ENCODE measurements at regions of chr3 and their contacts with region 1.

Region 1: DNA sequence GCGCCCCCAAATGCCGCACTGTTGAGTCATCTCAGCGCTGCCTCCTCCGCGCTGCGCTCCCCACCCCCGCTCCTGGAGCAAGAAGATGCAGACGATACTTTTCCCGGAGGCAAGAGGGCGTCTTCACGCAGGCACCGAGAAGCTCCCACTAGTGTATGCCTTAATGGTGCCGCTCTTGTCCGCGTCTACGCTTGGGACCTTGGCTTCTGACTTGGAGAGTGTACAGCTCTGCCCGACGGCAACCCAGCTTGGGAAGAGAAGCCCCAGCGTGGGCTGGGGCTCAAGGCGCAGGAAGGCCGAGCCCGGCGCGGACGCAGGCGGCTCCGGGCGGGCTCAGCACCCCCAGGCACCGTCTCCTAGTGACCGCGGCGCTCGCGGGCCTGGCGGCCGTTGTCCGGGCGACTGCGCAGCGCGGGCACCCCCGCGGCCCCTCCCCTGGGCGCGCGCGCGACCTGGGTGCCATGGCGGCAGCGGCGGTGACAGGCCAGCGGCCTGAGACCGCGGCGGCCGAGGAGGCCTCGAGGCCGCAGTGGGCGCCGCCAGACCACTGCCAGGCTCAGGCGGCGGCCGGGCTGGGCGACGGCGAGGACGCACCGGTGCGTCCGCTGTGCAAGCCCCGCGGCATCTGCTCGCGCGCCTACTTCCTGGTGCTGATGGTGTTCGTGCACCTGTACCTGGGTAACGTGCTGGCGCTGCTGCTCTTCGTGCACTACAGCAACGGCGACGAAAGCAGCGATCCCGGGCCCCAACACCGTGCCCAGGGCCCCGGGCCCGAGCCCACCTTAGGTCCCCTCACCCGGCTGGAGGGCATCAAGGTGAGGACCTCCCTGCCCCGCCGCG is at the start of gene P4HTM:
- DNase-seq: peak in 8 of 10 donors; percentile 77 to 94 (median 90)
- H3K4me3 ChIP-seq: peak within 1 kb of the TSS; percentile 65 to 97 (median 88)
- H3K27ac ChIP-seq: peak within 1 kb of the TSS; percentile 89 to 99 (median 96)
- H3K27me3 ChIP-seq: no peaks in the 10 kb centered on the region
- CTCF ChIP-seq: peak in 55 of 56 donors; percentile 29 to 73 (median 57)
- total RNA-seq, gene P4HTM: 91.4 to 175 (median 129) TPM

Region 2: GRCh38 chr3:48918388-48919214 is 71.4 kb before region 1 on chr3 and contains the start of gene ARIH2:
- intact Hi-C with region 1: loop called in 1 of 2 experiments (anchors 5 kb)
- DNase-seq: peak; percentile 84 to 96 (median 91)
- H3K4me3 ChIP-seq: peak within 1 kb of the TSS; percentile 56 to 98 (median 94)
- H3K27ac ChIP-seq: peak within 1 kb of the TSS; percentile 66 to 99 (median 96)
- H3K27me3 ChIP-seq: no peaks in the 10 kb centered on the region
- CTCF ChIP-seq: peak in 42 of 56 donors; percentile 4 to 67 (median 42)
- total RNA-seq, gene ARIH2: 88.9 to 207 (median 127) TPM

Region 3: DNA sequence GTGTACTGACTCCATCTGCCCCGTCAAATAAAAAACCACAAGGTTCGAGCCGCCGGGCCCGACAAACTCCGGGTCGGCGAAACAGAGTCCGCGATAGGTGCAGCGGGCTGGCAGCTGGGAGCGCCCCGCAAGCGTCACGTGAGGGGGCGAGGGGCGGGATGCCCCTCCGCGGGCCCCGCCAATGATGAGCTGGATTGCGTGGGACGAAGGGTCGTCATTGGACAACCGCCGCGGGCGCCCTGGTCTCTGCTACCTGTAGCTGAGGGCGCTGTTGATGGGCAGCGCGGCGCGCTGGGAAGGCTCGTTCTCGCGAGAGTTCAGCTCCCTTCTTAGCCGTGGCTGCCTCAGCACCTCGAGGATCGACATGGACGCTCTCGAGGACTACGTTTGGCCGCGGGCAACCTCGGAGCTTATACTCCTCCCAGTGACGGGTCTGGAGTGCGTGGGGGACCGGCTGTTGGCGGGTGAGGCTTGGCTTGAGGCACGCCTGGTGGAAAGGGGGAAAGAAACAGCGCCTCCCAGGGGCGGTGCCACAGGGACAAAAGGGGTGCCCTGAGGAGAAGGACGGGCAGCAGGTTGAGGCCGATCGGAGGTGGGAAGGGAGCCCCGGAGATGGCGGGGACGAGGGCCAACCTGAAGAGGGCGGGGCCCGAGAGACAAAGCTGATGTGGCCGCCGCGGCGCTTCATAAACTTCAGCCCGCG is 17.2 kb after region 1 on chr3 and contains the start of gene WDR6:
- intact Hi-C with region 1: loop called (anchors 1 to 2 kb)
- DNase-seq: peak; percentile 91 to 98 (median 96)
- H3K4me3 ChIP-seq: peak within 1 kb of the TSS; percentile 57 to 95 (median 80)
- H3K27ac ChIP-seq: peak within 1 kb of the TSS; percentile 68 to 98 (median 93)
- H3K27me3 ChIP-seq: no peaks in the 10 kb centered on the region
- CTCF ChIP-seq: peak in 55 of 56 donors; percentile 33 to 84 (median 61)
- total RNA-seq, gene WDR6: 60.3 to 190 (median 117) TPM

Region 4: GRCh38 chr3:49021813-49022687 is 32.0 kb after region 1 on chr3 and contains the start of gene NDUFAF3:
- intact Hi-C with region 1: loop called in 1 of 2 experiments (anchors 2 kb)
- DNase-seq: peak; percentile 85 to 95 (median 91)
- H3K4me3 ChIP-seq: peak within 1 kb of the TSS; percentile 73 to 100 (median 98)
- H3K27ac ChIP-seq: peak within 1 kb of the TSS; percentile 76 to 99 (median 97)
- H3K27me3 ChIP-seq: no peaks in the 10 kb centered on the region
- CTCF ChIP-seq: peak; percentile 80 to 99 (median 96)
- total RNA-seq, gene NDUFAF3: 57.3 to 129 (median 81.1) TPM

Region 5: DNA sequence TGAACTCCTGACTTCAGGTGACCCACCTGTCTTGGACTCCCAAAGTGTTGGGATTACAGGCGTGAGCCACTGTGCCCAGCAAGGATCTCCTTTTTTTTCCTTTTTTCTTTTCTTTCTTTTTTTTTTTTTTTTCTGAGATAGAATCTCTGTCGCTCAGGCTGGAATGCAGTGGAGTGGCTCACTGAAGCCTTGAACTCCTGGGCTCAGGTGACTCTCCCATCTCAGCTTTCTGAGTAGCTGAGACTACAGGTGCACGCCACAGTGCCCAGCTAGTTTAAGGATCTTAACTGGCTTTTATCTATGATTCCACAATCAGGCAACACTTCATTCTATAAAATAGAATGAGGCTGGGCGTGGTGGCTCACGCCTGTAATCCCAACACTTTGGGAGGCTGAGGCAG is 455.4 kb after region 1 on chr3:
- intact Hi-C with region 1: loop called in 1 of 2 experiments (anchors 5 kb)
- DNase-seq: no peak
- H3K4me3 ChIP-seq: no peak overlapping the region
- H3K27ac ChIP-seq: no peak overlapping the region
- H3K27me3 ChIP-seq: no peaks in the 10 kb centered on the region
- CTCF ChIP-seq: no peak